ENCODE measurements at regions of chr14 and their contacts with region 1.

Region 1: DNA sequence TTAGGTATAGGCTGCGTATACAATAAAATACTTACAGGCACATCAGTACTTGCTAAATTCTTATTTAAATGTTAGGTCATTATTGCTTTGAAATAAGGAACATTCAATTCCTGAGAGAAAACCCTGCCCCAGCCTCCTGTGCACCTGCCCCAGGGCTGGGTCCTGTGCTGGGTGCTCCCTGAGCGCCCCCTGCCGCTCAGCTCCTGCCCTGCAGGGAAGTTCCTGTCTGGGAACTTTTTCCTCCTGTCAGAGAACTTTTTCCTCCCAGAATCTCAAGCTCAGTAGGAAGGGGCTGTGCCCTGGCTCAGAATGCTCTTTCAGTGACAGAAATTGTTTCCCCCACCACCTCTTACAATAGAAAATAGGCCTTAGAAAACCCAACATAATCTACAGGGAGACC is 751.1 kb downstream of the TMEM121 start:
- DNase-seq: peak; percentile 66
- ATAC-seq: peak; percentile 51
- H3K4me3 Mint-ChIP-seq: peak overlapping the region; percentile 56
- H3K27ac Mint-ChIP-seq: no peak overlapping the region
- H3K4me1 Mint-ChIP-seq: peaks cover 34% of the 10 kb centered on the region
- H3K27me3 Mint-ChIP-seq: peaks cover 2% of the 10 kb centered on the region

Region 2: GRCh38 chr14:105793836-105794235 is 483.7 kb before region 1 on chr14:
- CTCF ChIA-PET with region 1: no interaction called
- POLR2A ChIA-PET with region 1: no interaction called
- intact Hi-C with region 1: no loop called
- DNase-seq: no peak
- ATAC-seq: no peak
- H3K4me3 Mint-ChIP-seq: no peak overlapping the region
- H3K27ac Mint-ChIP-seq: no peak overlapping the region
- H3K4me1 Mint-ChIP-seq: no peaks in the 10 kb centered on the region
- H3K27me3 Mint-ChIP-seq: peaks cover 27% of the 10 kb centered on the region

Region 3: DNA sequence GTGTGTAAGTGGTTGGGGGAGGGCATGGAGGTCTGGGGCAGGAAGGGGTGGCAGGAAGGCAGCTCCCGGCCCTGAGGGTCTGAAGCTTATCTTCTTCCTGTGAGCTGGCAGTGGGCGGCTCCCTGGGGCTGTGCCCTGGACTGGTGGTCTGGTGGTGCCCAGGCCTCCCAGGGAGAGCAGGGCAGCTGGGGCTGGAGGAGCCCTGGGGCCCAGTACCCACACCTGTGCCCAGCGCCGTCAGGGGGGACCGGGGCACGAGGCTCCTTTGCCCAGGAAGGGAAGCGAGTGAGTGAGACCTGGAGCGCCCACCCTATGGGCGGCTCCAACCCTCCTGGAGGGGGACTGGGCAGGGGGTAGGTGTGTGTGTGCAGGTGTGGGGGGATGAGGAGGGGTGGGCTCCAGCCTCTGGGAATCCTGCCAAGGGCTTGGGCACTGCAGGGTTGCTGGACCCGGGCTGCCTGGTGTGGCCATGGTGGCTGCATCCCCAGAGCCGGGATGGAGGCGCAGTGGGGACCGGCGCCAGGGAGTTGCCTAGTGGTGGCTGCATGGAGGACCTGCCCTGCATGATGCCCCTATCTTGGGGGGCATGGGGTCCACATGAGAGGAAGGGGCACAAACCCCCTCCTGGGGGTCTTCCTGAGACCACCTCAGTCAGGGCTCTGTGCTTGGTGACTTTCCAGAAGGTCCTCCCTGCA is 397.5 kb before region 1 on chr14:
- CTCF ChIA-PET with region 1: no interaction called
- POLR2A ChIA-PET with region 1: no interaction called
- intact Hi-C with region 1: loop called in 1 of 2 experiments (anchors 5 kb)
- DNase-seq: peak; percentile 3
- ATAC-seq: no peak
- H3K4me3 Mint-ChIP-seq: no peak overlapping the region
- H3K27ac Mint-ChIP-seq: no peak overlapping the region
- H3K4me1 Mint-ChIP-seq: peaks cover 2% of the 10 kb centered on the region
- H3K27me3 Mint-ChIP-seq: peaks cover 10% of the 10 kb centered on the region

Region 4: GRCh38 chr14:106120101-106120500 is 157.4 kb before region 1 on chr14:
- CTCF ChIA-PET with region 1: no interaction called
- POLR2A ChIA-PET with region 1: no interaction called
- intact Hi-C with region 1: no loop called
- DNase-seq: no peak
- ATAC-seq: no peak
- H3K4me3 Mint-ChIP-seq: no peak overlapping the region
- H3K27ac Mint-ChIP-seq: no peak overlapping the region
- H3K4me1 Mint-ChIP-seq: peaks cover 22% of the 10 kb centered on the region
- H3K27me3 Mint-ChIP-seq: peaks cover 9% of the 10 kb centered on the region

Region 5: DNA sequence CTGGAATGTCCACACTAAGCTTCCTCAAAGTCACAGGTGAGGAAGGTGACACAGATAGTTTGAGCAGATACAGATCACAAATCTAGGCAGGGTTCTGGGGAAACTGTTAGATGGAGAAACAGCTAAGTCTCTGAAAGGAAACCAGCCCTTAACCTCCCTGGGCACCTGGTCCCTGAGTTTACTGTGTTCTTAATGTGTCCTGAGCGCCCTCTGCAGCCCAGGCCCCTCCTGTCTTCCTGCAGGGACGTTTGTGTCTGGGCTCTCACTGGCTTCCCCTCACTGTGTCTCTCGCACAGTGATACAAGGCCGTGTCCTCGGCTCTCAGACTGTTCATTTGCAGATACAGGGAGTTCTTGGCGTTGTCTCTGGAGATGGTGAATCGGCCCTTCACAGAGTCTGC is 66.9 kb before region 1 on chr14:
- CTCF ChIA-PET with region 1: interaction called, 10 read pairs
- POLR2A ChIA-PET with region 1: no interaction called
- intact Hi-C with region 1: no loop called
- DNase-seq: peak; percentile 70
- ATAC-seq: peak; percentile 74
- H3K4me3 Mint-ChIP-seq: no peak overlapping the region
- H3K27ac Mint-ChIP-seq: no peak overlapping the region
- H3K4me1 Mint-ChIP-seq: peaks cover 10% of the 10 kb centered on the region
- H3K27me3 Mint-ChIP-seq: peaks cover 2% of the 10 kb centered on the region

Measured in activated CD4-positive, alpha-beta T cell treated with anti-CD3 and anti-CD28 coated beads for 36 hours (primary cell).